GM12878 (cell line): ENCODE measurements at regions of chr6 and their contacts with region 1.

Region 1: DNA sequence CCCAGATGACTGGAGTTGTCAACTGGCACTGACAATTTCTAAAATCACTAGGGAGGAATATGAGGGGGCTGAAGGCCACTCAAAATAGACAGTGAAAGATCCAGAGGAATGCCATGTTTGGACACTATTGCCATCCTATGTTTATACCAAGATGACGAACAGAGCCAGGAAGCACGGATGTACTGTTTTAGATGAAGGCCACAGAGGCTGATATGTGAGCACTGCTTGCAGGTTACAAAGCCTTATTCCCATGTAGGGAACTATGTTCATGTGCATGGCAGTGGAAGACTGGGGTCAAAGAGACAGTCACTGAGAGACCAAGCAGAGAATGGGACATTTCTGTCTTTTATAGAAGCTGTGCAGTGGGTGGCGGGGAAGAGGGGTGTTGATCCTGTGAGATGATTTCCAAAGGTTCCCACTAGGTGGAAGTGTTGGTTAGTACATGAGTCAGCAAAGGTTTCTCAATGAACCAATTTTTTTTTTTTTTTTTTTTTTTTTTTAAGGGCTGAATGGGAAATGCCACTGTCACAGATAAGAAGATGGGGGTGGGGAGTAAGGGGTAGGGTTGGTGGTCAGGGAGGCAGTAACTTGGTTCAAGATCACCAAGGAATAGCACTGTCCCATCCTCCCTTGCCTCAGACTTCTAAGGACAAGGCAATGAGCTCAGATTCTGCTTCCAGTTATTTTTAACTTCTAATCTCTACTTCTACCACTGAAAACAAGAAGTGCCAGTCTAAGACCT is 46.7 kb upstream of the MOCS1 start:
- DNase-seq: no peak
- ATAC-seq: peak; percentile 79
- H3K4me3 ChIP-seq: no peak overlapping the region
- H3K27ac ChIP-seq: no peak overlapping the region
- H3K4me1 ChIP-seq: no peaks in the 10 kb centered on the region
- H3K27me3 ChIP-seq: no peaks in the 10 kb centered on the region; a peak in 1 of 4 replicates
- CTCF ChIP-seq: peak; percentile 22 to 68 (median 30); a peak in 4 of 6 replicates
- EP300 ChIP-seq: no peak
- POLR2A ChIP-seq: no peak
- RAD21 ChIP-seq: peak; percentile 62

Region 2: GRCh38 chr6:39335780-39336545 is 645.0 kb before region 1 on chr6:
- CTCF ChIA-PET with region 1: no interaction called
- POLR2A ChIA-PET with region 1: no interaction called
- RAD21 ChIA-PET with region 1: no interaction called
- SMC1A ChIA-PET with region 1: no interaction called
- in situ Hi-C with region 1: no loop called
- intact Hi-C with region 1: no loop called
- DNase-seq: no peak
- ATAC-seq: peak; percentile 91
- H3K4me3 ChIP-seq: no peak overlapping the region
- H3K27ac ChIP-seq: no peak overlapping the region
- H3K4me1 ChIP-seq: peaks cover 7% of the 10 kb centered on the region
- H3K27me3 ChIP-seq: no peaks in the 10 kb centered on the region
- CTCF ChIP-seq: no peak
- EP300 ChIP-seq: no peak
- POLR2A ChIP-seq: no peak
- RAD21 ChIP-seq: no peak

Region 3: DNA sequence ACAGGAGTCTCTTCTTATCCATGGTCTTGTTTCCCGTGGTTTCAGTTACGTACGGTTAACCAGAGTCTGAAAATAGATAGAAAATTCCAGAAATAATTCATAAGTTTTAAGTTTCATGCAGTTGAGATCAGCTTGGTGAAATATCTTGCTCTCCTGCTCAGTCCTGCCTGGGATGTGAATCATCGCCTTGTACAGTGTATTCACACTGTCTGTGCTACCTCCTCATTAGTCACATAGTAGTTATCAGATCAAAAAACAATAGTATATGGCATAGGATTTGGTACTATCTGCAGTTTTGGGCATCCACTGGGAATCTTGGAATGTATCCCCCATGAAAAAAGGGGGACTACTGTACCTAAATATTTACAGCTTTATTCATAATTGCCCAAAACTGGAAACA is 24.1 kb before region 1 on chr6:
- CTCF ChIA-PET with region 1: no interaction called
- POLR2A ChIA-PET with region 1: no interaction called
- RAD21 ChIA-PET with region 1: no interaction called
- SMC1A ChIA-PET with region 1: no interaction called
- in situ Hi-C with region 1: no loop called
- intact Hi-C with region 1: no loop called
- DNase-seq: no peak
- ATAC-seq: no peak
- H3K4me3 ChIP-seq: no peak overlapping the region
- H3K27ac ChIP-seq: no peak overlapping the region
- H3K4me1 ChIP-seq: no peaks in the 10 kb centered on the region
- H3K27me3 ChIP-seq: no peaks in the 10 kb centered on the region
- CTCF ChIP-seq: no peak
- EP300 ChIP-seq: no peak
- POLR2A ChIP-seq: no peak
- RAD21 ChIP-seq: no peak

Region 4: GRCh38 chr6:40054602-40055001 is 73.6 kb after region 1 on chr6:
- CTCF ChIA-PET with region 1: no interaction called
- POLR2A ChIA-PET with region 1: no interaction called
- RAD21 ChIA-PET with region 1: interaction called, 3 read pairs
- SMC1A ChIA-PET with region 1: interaction called, 10 read pairs
- in situ Hi-C with region 1: no loop called
- intact Hi-C with region 1: no loop called
- DNase-seq: no peak
- ATAC-seq: no peak
- H3K4me3 ChIP-seq: no peak overlapping the region
- H3K27ac ChIP-seq: no peak overlapping the region
- H3K4me1 ChIP-seq: no peaks in the 10 kb centered on the region
- H3K27me3 ChIP-seq: no peaks in the 10 kb centered on the region
- CTCF ChIP-seq: no peak
- EP300 ChIP-seq: no peak
- POLR2A ChIP-seq: no peak
- RAD21 ChIP-seq: no peak